HepG2 (cell line): ENCODE measurements at regions of chr14 and their contacts with region 1.

Region 1: GRCh38 chr14:22900081-22900799 is 17.2 kb downstream of the REM2 start:
- DNase-seq: peak; percentile 83
- ATAC-seq: peak; percentile 39
- H3K4me3 ChIP-seq: no peak overlapping the region
- H3K27ac ChIP-seq: no peak overlapping the region
- H3K4me1 ChIP-seq: peaks cover 45% of the 10 kb centered on the region
- H3K27me3 ChIP-seq: peaks cover 4 to 6% of the 10 kb centered on the region in 2 experiments; a peak in 2 of 5 replicates
- CTCF ChIP-seq: peak; percentile 87
- EP300 ChIP-seq: no peak
- POLR2A ChIP-seq: no peak
- RAD21 ChIP-seq: peak; percentile 56; the same call in 1 of the 2 replicates

Region 2: GRCh38 chr14:22314181-22314820 is 585.9 kb before region 1 on chr14:
- CTCF ChIA-PET with region 1: no interaction called
- POLR2A ChIA-PET with region 1: no interaction called
- in situ Hi-C with region 1: no loop called
- intact Hi-C with region 1: no loop called
- DNase-seq: peak; percentile 82
- ATAC-seq: peak; percentile 97
- H3K4me3 ChIP-seq: no peak overlapping the region
- H3K27ac ChIP-seq: no peak overlapping the region
- H3K4me1 ChIP-seq: no peaks in the 10 kb centered on the region
- H3K27me3 ChIP-seq: no peaks in the 10 kb centered on the region; a peak in 1 of 5 replicates
- CTCF ChIP-seq: peak; percentile 88
- EP300 ChIP-seq: no peak
- POLR2A ChIP-seq: no peak
- RAD21 ChIP-seq: peak; percentile 70; the same call in 1 of the 2 replicates

Region 3: DNA sequence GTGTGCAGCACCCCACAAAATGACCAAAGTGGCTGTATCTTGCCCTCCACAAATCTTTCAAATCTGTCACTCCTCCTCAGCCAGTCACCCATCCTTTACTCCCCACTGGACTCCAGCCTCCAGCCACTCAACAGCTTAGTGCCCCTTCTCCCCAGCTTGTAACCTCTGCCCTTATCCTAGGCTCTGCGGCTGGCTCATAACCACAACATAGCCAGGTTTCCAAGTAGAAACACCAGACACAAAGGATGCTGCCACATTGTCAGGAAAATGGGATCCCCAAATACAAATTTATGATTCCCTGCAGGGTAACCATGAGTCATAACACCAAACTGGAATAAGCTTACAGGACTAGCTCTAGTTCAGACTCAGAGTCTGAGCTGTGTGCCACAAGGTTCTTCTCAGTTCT is 118.7 kb before region 1 on chr14:
- CTCF ChIA-PET with region 1: interaction called, 9 read pairs
- POLR2A ChIA-PET with region 1: no interaction called
- in situ Hi-C with region 1: no loop called
- intact Hi-C with region 1: loop called (anchors 1 kb)
- DNase-seq: no peak
- ATAC-seq: no peak
- H3K4me3 ChIP-seq: no peak overlapping the region
- H3K27ac ChIP-seq: no peak overlapping the region
- H3K4me1 ChIP-seq: peaks cover 7% of the 10 kb centered on the region; the same call in 1 of the 2 replicates
- H3K27me3 ChIP-seq: no peaks in the 10 kb centered on the region
- CTCF ChIP-seq: no peak
- EP300 ChIP-seq: no peak
- POLR2A ChIP-seq: no peak
- RAD21 ChIP-seq: no peak

Region 4: DNA sequence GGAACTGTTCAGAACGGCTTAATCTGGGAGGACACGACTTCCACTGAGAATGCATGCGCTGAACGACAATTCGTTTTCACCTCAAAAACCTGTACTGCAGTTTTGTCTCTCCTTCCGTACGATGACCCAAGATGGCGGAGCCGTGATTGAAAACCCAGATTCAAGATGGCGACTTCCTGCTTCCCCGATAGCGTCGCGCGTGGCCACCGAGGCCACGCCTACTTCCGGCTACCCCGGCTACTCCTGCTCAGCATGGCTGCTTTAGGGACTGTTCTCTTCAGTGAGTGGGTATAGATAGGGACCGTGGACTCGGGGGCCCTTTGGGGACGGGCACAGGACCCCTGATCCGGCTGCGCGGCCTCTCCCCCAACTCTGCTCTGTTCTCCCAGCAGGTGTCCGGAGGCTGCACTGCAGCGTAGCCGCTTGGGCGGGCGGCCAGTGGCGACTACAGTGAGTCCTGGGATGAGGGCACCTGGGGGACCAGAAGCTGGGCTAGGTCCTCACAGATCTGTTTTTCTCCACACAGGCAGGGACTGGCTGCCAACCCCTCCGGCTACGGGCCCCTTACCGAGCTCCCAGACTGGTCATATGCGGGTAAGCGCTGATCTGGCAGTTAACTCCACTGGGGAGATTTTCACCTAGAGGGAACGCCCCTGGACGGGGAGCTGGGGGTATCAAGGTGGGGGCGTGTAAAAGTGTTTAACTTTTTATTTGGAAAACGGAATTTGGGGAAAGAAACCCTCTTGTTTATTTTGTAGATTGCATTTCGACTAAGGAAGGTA is 70.4 kb before region 1 on chr14 and contains the start of gene MRPL52:
- CTCF ChIA-PET with region 1: no interaction called
- POLR2A ChIA-PET with region 1: interaction called, 11 read pairs
- in situ Hi-C with region 1: no loop called
- intact Hi-C with region 1: no loop called
- DNase-seq: peak; percentile 97
- ATAC-seq: peak; percentile 94
- H3K4me3 ChIP-seq: peak within 1 kb of the TSS; percentile 74 to 97 (median 88)
- H3K27ac ChIP-seq: peak within 1 kb of the TSS; percentile 65
- H3K4me1 ChIP-seq: peaks cover 24% of the 10 kb centered on the region
- H3K27me3 ChIP-seq: no peaks in the 10 kb centered on the region; a peak in 1 of 5 replicates
- CTCF ChIP-seq: peak; percentile 37
- EP300 ChIP-seq: peak in 1 of 2 experiments; percentile 69; a peak in 1 of 4 replicates
- POLR2A ChIP-seq: peak; percentile 91 to 97
- RAD21 ChIP-seq: peak; percentile 53; the same call in 1 of the 2 replicates
- total RNA-seq, gene MRPL52: 329 and 420 TPM in 2 replicates

Region 5: GRCh38 chr14:22887990-22888378 is 12.3 kb before region 1 on chr14:
- CTCF ChIA-PET with region 1: no interaction called
- POLR2A ChIA-PET with region 1: interaction called, 11 read pairs
- in situ Hi-C with region 1: no loop called
- intact Hi-C with region 1: no loop called
- DNase-seq: no peak
- ATAC-seq: peak; percentile 2
- H3K4me3 ChIP-seq: no peak overlapping the region
- H3K27ac ChIP-seq: no peak overlapping the region
- H3K4me1 ChIP-seq: peaks cover 15% of the 10 kb centered on the region
- H3K27me3 ChIP-seq: peaks cover 8 to 57% of the 10 kb centered on the region in 2 experiments; a peak in 4 of 5 replicates
- CTCF ChIP-seq: no peak
- EP300 ChIP-seq: no peak
- POLR2A ChIP-seq: no peak
- RAD21 ChIP-seq: no peak

Region 6: DNA sequence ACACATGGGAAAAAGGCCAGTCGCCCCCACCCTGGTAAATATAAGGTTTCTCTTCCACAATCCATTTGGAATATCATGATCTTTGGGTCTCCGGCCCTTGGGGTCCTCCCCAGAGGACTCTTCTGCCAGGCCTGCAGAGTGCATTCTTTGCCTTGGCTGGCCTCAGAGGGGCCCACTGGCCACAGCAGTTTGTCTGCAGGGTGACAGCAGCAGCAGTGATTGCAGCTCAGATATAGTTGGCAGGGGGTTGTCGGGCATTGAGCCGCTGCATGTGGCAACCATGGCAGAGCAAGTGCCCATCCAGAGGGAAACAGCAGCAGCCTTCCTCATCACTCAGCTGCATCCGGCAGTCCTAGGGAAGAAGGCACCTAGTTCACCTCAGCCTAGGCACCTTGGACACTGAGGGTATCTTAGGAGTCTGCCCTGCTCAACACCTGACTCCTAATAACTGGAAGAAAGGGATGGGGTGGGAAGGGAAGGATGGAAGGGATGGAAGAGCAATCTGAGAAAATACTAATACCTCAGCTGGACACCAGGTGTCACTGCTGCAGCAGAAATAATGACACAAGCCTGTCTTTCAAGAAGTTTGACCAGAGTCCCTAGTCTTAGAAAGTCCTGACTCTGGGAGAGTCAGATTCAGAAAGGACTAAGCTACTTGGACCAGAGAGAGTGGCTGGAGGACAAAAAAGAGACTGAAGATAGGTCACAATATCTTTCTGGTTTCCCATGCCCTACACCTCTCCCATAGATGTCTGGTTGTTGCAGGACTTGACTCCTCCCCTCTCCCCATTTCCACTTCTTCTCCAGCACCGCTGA is 73.2 kb after region 1 on chr14:
- CTCF ChIA-PET with region 1: no interaction called
- POLR2A ChIA-PET with region 1: interaction called, 23 read pairs
- in situ Hi-C with region 1: no loop called
- intact Hi-C with region 1: no loop called
- DNase-seq: peak; percentile 82
- ATAC-seq: no peak
- H3K4me3 ChIP-seq: no peak overlapping the region
- H3K27ac ChIP-seq: peak overlapping the region; percentile 97
- H3K4me1 ChIP-seq: peaks cover 65% of the 10 kb centered on the region
- H3K27me3 ChIP-seq: no peaks in the 10 kb centered on the region
- CTCF ChIP-seq: no peak
- EP300 ChIP-seq: no peak
- POLR2A ChIP-seq: peak in 1 of 2 experiments; percentile 73; a peak in 2 of 4 replicates
- RAD21 ChIP-seq: peak; percentile 97